ENCODE measurements at regions of chr2 and their contacts with region 1.

Region 1: GRCh38 chr2:109486711-109487535 is 126.8 kb downstream of the SEPTIN10 start:
- DNase-seq: peak in 1 of 2 donors; percentile 12
- ATAC-seq: no peak
- H3K4me3 ChIP-seq: no peak overlapping the region
- H3K27ac ChIP-seq: peak overlapping the region in 1 of 2 donors; percentile 76
- H3K4me1 ChIP-seq: no peaks in the 10 kb centered on the region
- H3K27me3 ChIP-seq: no peaks in the 10 kb centered on the region

Region 2: DNA sequence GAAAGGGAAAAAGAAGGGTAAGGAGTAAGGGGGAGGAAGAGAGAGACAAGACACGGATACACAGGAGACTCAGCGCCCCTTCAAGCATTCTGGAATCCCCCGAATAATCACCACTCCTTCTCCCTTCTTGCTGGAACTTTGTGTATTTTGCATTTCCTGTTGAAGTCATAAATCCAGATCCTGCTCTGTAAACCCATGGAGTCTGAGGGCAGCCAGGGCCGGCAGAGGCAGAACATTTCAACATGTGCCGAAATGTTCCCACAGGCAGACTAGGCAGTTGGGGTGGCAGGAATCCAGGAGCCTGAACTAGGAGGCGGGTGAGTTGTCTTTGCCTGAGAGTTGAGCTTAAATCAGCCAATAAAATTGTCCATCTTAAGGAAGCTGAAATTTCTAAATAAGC is 164.8 kb before region 1 on chr2:
- intact Hi-C with region 1: loop called in 1 of 2 experiments (anchors 10 kb)
- DNase-seq: peak; percentile 93 to 94
- ATAC-seq: peak; percentile 79
- H3K4me3 ChIP-seq: no peak overlapping the region
- H3K27ac ChIP-seq: peak overlapping the region; percentile 97
- H3K4me1 ChIP-seq: peaks cover 4 to 9% of the 10 kb centered on the region in 2 donors
- H3K27me3 ChIP-seq: no peaks in the 10 kb centered on the region

Region 3: DNA sequence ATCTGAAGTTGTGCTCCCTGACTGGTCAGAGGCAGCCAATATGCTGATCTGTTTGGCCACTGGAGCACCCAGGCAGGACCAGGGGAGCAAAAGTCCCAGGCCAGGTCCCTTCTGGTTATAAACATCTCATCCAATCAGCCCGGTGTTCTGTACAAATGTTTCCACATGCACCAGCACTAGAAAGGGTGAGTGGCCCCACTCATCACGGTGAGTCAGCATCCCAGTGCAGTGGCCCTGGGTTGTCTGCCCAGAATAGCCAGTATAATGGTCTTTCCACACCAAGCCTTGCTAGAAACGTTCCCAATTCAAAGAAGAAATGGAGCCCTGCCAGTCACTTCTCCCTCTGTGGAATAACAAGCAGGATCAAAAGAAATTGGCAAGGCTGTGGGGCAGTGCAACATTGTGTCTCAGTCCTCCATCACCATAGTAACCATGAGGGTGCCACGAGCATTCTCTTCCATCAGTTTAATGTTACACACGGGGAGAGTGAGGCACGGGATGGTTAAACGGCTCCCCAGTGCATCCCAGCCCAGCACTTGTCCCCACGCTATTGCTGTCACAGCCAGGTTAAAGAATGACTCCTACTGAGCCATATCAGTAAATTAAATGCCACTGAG is 48.0 kb before region 1 on chr2:
- intact Hi-C with region 1: loop called in 1 of 2 experiments (anchors 5 kb)
- DNase-seq: peak; percentile 83
- ATAC-seq: peak; percentile 76
- H3K4me3 ChIP-seq: no peak overlapping the region
- H3K27ac ChIP-seq: peak overlapping the region; percentile 85 to 94
- H3K4me1 ChIP-seq: peaks cover 0 to 5% of the 10 kb centered on the region in 2 donors
- H3K27me3 ChIP-seq: no peaks in the 10 kb centered on the region

Region 4: DNA sequence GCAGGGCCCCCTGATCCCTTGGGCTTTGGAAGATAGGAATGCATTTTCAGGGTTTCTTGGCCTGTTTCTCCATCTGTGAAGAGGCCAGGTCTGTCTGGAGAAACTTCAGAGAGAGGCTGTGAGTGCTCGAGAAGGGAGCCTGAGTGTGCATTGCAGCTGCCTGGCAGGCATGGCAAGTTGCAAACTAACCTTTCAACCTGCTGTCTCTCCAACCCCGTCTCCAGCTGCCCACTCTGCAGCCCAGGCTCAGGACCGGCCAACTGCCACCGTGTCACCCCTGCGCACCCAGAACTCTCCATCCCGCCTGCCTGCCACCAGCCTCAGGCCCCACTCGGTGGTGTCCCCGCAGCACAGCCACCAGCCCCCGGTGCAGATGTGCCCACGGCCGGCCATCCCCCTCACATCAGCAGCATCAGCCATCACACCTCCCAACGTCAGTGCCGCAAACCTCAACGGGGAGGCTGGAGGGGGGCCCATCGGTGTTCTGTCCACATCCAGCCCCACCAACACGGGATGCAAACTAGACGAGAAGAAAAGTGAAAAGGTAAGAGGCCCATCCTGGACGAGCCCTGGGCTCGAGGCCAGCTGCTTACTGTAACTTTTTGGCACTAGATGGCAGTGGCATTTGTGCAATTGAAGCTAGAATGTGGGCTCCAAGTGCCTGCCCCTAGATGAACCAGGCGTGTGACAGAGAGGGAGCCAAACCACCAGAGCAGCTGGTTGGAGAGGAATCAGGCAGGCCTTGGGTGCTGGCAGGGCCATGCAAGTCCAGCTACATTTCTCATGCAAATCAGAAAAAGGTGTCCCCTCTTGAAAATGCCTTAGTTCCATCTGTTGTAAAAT is 37.8 kb before region 1 on chr2:
- intact Hi-C with region 1: loop called (anchors 5 kb)
- DNase-seq: peak; percentile 67 to 78
- ATAC-seq: no peak
- H3K4me3 ChIP-seq: no peak overlapping the region
- H3K27ac ChIP-seq: peak overlapping the region in 1 of 2 donors; percentile 3
- H3K4me1 ChIP-seq: no peaks in the 10 kb centered on the region
- H3K27me3 ChIP-seq: no peaks in the 10 kb centered on the region

Measured in aorta (tissue), 5 donors.